Activated naive CD8-positive, alpha-beta T cell treated with anti-CD3 and anti-CD28 coated beads, Interleukin-2, amount 10 ng/mL, durations not matched to agents 7 days and 5 days (primary cell): ENCODE measurements at regions of chr2 and their contacts with region 1.

Region 1: DNA sequence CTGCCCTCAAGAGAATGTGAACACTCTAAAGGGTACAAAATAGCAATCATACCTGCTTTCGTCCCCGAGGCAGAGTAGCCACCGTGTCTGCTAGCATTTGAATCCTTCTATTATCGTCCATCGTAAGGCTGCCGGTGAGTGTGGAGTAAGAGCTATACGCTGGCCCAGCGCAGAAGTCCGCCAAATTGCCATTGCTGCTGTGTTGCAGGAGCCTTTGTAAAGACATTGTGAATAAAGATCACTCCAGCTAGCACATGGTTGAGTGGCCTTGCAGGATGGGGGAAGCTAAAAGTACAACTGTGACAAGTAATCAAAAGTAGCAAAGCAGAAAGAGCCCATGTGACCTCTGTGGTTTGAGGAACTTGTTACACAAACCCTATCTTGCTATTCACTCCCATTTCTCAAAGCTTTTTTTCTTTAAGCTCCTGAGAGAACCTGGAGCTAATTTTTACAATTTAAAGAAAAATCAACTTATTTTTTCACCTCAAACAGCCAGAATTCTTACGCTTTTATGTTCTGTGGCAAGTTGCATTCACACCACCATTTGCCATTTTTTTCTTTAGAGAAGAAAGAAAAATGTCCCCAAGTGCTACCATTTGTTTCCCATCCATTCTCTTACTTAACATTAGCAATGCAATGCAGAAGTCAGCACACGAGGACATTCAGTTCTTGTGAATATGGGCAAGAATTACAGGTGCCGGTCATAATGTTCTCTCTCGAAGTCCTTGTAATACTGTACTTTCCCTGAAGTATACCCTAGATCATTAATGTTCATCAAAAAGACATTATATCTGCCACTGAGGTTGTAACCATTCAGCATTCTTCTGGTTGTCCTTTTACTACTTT is at the start of gene CYTIP:
- DNase-seq: peak; percentile 73
- ATAC-seq: peak; percentile 51
- H3K4me3 Mint-ChIP-seq: peak within 1 kb of the TSS; percentile 90
- H3K27ac Mint-ChIP-seq: peak within 1 kb of the TSS; percentile 92
- H3K4me1 Mint-ChIP-seq: peaks cover 35% of the 10 kb centered on the region
- H3K27me3 Mint-ChIP-seq: no peaks in the 10 kb centered on the region
- total RNA-seq, gene CYTIP: 233 to 238 TPM

Region 2: GRCh38 chr2:157404363-157404762 is 39.7 kb before region 1 on chr2:
- POLR2A ChIA-PET with region 1: interaction called, 15 read pairs
- DNase-seq: peak; percentile 34
- ATAC-seq: peak; percentile 96
- H3K4me3 Mint-ChIP-seq: peak overlapping the region; percentile 52
- H3K27ac Mint-ChIP-seq: peak overlapping the region; percentile 90
- H3K4me1 Mint-ChIP-seq: peaks cover 53% of the 10 kb centered on the region
- H3K27me3 Mint-ChIP-seq: no peaks in the 10 kb centered on the region

Region 3: DNA sequence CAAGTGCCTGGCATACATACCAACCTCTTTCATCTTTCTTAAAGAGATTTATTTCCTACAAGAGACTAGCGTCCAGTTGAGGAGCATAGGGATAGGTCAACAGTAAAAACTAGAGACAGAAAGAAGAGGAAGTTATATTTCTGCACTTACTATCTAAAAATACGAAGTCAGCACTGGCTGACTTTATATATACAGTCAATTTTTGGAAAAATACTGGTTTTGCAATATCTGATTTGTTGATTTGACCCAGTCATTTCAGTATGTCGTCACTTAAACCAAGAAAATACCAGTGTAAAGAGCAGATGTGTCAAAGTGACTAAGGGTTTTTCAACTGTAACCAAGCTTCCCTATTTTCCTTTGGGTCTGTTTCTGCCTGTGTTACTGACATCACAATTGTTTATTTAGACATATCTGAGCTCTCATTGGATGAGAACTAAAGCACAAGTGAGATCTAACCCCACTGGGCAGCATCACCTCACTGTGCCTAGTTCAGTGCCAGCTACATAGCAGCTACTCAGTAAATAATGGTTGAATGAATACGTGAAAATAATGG is 23.2 kb before region 1 on chr2:
- POLR2A ChIA-PET with region 1: interaction called, 470 read pairs
- DNase-seq: no peak
- ATAC-seq: peak; percentile 24
- H3K4me3 Mint-ChIP-seq: peak overlapping the region; percentile 63
- H3K27ac Mint-ChIP-seq: peak overlapping the region; percentile 85
- H3K4me1 Mint-ChIP-seq: peaks cover 64% of the 10 kb centered on the region
- H3K27me3 Mint-ChIP-seq: no peaks in the 10 kb centered on the region

Region 4: GRCh38 chr2:157480182-157480961 is 36.4 kb after region 1 on chr2:
- POLR2A ChIA-PET with region 1: interaction called, 78 read pairs
- DNase-seq: peak; percentile 53
- ATAC-seq: peak; percentile 46
- H3K4me3 Mint-ChIP-seq: peak overlapping the region; percentile 84
- H3K27ac Mint-ChIP-seq: peak overlapping the region; percentile 97
- H3K4me1 Mint-ChIP-seq: peaks cover 65% of the 10 kb centered on the region
- H3K27me3 Mint-ChIP-seq: no peaks in the 10 kb centered on the region

Region 5: DNA sequence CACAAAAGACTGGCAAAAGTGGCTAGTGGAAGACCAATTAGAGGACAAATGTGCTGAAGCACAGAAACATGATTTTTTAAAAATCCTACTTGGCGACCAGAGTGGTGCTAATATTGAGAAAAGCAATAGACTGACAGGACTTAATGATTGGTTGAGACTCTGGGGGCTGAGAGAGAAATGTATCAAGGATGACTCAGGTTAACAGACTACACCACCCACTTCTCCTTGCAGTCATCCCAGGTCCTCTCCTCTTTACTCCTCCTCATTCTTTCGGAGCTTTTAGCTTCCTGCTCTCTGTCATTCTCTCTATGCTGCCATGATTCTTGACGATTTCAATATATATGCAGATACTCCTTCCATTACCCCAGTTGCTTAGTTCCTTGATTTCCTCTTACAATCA is 54.5 kb after region 1 on chr2:
- POLR2A ChIA-PET with region 1: no interaction called
- DNase-seq: no peak
- ATAC-seq: no peak
- H3K4me3 Mint-ChIP-seq: no peak overlapping the region
- H3K27ac Mint-ChIP-seq: no peak overlapping the region
- H3K4me1 Mint-ChIP-seq: peaks cover 16% of the 10 kb centered on the region
- H3K27me3 Mint-ChIP-seq: no peaks in the 10 kb centered on the region

Region 6: GRCh38 chr2:157509744-157510143 is 65.7 kb after region 1 on chr2:
- POLR2A ChIA-PET with region 1: no interaction called
- DNase-seq: no peak
- ATAC-seq: no peak
- H3K4me3 Mint-ChIP-seq: no peak overlapping the region
- H3K27ac Mint-ChIP-seq: no peak overlapping the region
- H3K4me1 Mint-ChIP-seq: peaks cover 6% of the 10 kb centered on the region
- H3K27me3 Mint-ChIP-seq: peaks cover 33% of the 10 kb centered on the region

Region 7: DNA sequence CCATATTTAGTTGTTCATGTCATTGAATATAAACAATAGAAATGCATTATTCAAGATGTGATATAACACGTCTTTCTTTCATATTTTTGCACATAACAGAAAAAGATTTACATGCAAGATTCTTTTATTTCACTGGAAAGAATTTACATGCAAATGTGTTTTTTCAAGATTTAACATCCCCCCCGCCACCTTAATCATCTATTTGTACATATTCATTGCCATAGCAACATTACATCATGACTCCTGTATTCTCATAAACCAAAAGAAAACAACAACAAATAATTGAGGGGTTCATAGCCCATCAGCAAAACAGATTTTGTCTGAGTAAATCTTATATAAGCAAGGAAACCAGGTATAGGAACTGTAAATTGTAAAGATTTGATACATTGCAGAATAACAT is 187.8 kb after region 1 on chr2:
- POLR2A ChIA-PET with region 1: no interaction called
- DNase-seq: no peak
- ATAC-seq: no peak
- H3K4me3 Mint-ChIP-seq: no peak overlapping the region
- H3K27ac Mint-ChIP-seq: no peak overlapping the region
- H3K4me1 Mint-ChIP-seq: peaks cover 14% of the 10 kb centered on the region
- H3K27me3 Mint-ChIP-seq: peaks cover 11% of the 10 kb centered on the region